G401 (cell line): ENCODE measurements at regions of chr2 and their contacts with region 1.

Region 1: DNA sequence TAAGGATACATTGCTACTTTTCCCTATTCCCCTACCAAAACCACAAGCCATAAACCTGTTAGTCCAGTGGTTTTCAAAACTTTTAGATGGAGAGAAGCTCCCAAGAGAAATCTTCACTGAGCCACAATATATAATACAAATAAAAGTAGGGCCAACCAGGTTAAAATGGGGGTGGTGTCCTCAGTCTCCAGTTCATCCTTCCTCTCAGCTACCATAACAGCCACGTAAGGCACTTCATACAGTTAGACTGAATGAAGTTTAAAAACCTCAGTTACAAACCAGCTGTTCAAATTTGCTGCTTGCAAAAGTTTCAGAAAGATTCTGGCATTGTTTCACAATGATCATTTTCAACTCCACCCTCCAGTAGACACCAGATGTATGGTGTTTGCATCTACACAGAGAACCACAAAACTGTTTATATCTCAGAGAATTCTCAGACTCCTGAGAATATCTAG is 26.0 kb downstream of the SOS1 start:
- DNase-seq: no peak

Region 2: DNA sequence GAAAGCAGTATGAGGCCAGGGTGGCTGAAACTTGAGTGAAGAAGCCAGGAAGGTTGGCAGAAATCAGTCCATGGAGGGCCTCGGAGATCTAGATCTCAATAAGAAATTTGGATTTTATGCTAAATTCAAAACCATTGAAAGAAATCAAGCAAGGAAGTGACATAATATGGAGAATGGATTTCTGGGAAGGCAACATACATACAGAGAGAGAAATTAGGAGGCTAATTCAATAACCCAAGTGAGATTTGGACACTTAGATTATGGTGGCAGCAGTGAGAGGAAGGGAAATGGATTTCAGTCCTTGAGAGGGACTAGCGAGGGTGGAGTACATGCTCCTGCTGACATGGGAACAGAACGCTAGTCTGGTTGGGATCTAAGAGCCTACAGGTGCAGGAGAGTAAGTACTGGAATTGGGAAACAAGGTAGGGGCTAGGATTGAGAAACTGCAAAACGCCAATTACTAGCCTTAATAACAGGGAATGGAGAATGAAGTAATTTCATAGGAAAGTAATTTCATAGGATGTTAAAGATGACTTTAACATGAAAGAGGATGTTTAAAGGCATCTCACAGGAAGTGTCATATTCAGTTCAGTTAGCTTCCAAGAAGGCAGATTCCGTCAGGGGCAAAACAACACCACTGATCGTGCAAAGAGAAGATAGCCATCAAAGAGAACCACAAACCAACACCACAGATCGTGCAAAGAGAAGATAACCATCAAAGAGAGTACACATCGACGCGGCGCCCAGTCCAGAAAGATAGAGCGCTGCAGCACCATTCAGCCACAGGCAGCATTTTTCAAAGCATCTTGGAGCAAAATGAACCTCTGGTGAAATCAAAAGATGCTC is 121.7 kb after region 1 on chr2:
- in situ Hi-C with region 1: loop called (anchors 25 kb)
- DNase-seq: no peak